Endothelial cell of umbilical vein (primary cell): ENCODE measurements at regions of chr12 and their contacts with region 1.

Region 1: GRCh38 chr12:90253674-90254181 is 545.1 kb upstream of the ATP2B1 start:
- DNase-seq: peak; percentile 90
- H3K4me3 ChIP-seq: no peak overlapping the region
- H3K27ac ChIP-seq: peak overlapping the region; percentile 47
- H3K4me1 ChIP-seq: peaks cover 21% of the 10 kb centered on the region
- H3K27me3 ChIP-seq: no peaks in the 10 kb centered on the region
- CTCF ChIP-seq: peak; percentile 20 to 53
- POLR2A ChIP-seq: no peak

Region 2: GRCh38 chr12:89862511-89863179 is 391.1 kb before region 1 on chr12:
- CTCF ChIA-PET with region 1: no interaction called
- POLR2A ChIA-PET with region 1: no interaction called
- dilution Hi-C with region 1: no loop called
- intact Hi-C with region 1: loop called (anchors 10 kb)
- DNase-seq: peak; percentile 61
- H3K4me3 ChIP-seq: no peak overlapping the region
- H3K27ac ChIP-seq: peak overlapping the region; percentile 40
- H3K4me1 ChIP-seq: peaks cover 18% of the 10 kb centered on the region
- H3K27me3 ChIP-seq: no peaks in the 10 kb centered on the region
- CTCF ChIP-seq: no peak
- POLR2A ChIP-seq: no peak

Region 3: DNA sequence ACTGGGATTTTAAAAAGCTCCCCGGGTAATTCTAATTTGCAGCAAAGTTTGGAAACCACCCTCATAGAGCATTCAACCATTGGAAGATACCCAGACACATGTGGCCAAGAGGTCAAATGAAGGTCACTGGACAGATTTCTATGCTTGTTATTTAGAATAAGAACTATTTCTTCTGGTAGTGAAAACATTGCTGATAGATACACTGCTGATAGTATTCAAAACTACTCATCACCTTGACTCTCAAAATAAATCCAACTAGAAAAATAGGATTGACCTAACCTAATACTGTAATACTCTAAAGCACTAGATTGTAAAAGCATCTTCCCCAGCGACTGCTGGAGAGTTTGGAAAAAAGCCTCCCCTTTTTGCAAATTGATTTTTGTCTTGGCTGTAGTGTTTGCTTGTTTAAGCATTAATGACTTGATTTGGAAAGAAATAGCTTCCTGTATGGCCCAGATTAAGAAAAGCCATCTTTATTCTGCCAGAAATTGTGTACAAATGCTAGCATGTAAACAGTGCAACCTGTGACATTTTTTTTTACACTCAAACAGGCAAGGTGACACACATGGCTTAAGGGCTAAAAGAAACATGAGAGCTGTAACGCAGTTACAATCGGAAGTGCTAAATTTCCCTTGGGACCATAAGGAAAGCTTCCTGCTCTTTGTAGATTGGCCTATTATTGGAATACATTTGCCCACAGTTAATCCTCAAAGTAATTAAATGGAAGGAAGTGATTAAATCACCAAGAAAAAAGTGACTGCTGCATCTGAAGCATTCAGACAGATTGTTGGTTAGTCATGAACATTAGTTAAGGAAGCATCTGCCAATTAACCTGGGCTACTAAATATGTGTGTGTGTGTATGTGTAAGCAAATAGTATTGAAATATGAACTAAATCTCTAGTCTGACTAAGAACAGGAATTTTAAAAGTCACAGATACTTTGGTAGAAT is 188.6 kb before region 1 on chr12:
- CTCF ChIA-PET with region 1: no interaction called
- POLR2A ChIA-PET with region 1: no interaction called
- dilution Hi-C with region 1: no loop called
- intact Hi-C with region 1: loop called (anchors 2 kb)
- DNase-seq: peak; percentile 83
- H3K4me3 ChIP-seq: no peak overlapping the region
- H3K27ac ChIP-seq: no peak overlapping the region
- H3K4me1 ChIP-seq: peaks cover 10% of the 10 kb centered on the region
- H3K27me3 ChIP-seq: no peaks in the 10 kb centered on the region
- CTCF ChIP-seq: no peak
- POLR2A ChIP-seq: no peak

Region 4: DNA sequence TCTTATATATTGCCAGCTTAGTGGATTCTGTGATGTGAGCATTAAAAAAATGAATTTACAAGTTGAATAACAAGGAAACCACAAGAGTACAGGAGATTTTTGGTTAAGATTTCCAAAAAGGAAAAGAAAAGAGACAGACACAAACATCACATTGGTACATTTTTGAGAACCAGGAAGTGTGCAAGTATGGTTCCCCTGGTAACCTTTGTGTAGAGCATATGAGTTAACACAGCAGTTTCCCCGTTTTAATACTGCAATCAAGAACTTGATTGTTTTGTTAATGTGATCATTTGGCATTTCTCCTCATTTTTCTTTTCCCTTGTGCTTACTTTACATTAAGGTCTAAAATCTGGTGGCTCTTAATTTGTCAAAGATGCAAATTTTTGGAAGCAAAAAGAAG is 54.7 kb before region 1 on chr12:
- CTCF ChIA-PET with region 1: no interaction called
- POLR2A ChIA-PET with region 1: no interaction called
- dilution Hi-C with region 1: no loop called
- intact Hi-C with region 1: loop called (anchors 1 kb)
- DNase-seq: peak; percentile 91
- H3K4me3 ChIP-seq: peak overlapping the region in 1 of 3 experiments; percentile 17
- H3K27ac ChIP-seq: peak overlapping the region; percentile 95
- H3K4me1 ChIP-seq: peaks cover 27% of the 10 kb centered on the region
- H3K27me3 ChIP-seq: no peaks in the 10 kb centered on the region
- CTCF ChIP-seq: no peak
- POLR2A ChIP-seq: no peak

Region 5: DNA sequence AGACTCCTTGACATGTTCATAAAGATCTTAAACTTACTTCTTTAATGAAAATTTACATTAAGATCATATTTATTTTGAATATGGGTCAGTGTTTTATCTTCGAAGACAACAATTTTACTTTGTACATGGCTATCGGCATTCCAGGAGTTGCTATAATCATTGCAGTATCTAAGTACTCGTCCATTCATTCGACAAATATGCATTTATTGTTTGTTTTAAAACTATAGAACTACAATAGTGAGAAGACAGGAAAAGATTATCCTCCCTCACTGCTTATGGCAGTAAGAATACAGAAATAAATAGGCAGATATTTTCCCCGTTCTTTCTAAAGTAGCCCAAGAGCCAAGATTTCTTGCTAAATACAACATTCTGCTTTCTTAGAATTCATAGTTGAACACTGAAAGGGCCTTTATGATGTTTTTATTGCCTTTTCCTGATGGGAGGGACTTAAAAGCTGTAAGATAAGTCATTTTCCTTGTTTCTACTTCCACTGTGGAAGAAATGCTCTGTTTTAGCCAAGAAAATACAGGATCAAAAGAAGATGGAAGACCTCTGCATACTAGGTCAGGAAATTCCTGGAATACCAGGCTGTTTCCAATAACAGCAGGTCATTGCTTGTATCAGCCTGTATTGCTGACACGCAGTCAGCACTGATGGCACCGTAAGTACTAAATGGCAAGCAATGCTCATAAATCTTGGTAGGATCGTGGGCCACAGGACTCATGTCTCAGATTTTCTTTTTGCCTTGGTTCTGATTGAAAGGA is 24.1 kb before region 1 on chr12:
- CTCF ChIA-PET with region 1: no interaction called
- POLR2A ChIA-PET with region 1: no interaction called
- dilution Hi-C with region 1: no loop called
- intact Hi-C with region 1: loop called (anchors 1 kb)
- DNase-seq: peak; percentile 92
- H3K4me3 ChIP-seq: peak overlapping the region in 1 of 3 experiments; percentile 38
- H3K27ac ChIP-seq: peak overlapping the region; percentile 66
- H3K4me1 ChIP-seq: peaks cover 25% of the 10 kb centered on the region
- H3K27me3 ChIP-seq: no peaks in the 10 kb centered on the region
- CTCF ChIP-seq: no peak
- POLR2A ChIP-seq: no peak

Region 6: GRCh38 chr12:90441431-90441830 is 187.7 kb after region 1 on chr12:
- CTCF ChIA-PET with region 1: no interaction called
- POLR2A ChIA-PET with region 1: no interaction called
- dilution Hi-C with region 1: no loop called
- intact Hi-C with region 1: no loop called
- DNase-seq: no peak
- H3K4me3 ChIP-seq: no peak overlapping the region
- H3K27ac ChIP-seq: no peak overlapping the region
- H3K4me1 ChIP-seq: no peaks in the 10 kb centered on the region
- H3K27me3 ChIP-seq: no peaks in the 10 kb centered on the region
- CTCF ChIP-seq: no peak
- POLR2A ChIP-seq: no peak

Region 7: GRCh38 chr12:90854136-90854689 is 600.5 kb after region 1 on chr12:
- CTCF ChIA-PET with region 1: interaction called, 3 read pairs
- POLR2A ChIA-PET with region 1: no interaction called
- dilution Hi-C with region 1: no loop called
- intact Hi-C with region 1: loop called (anchors 1 kb)
- DNase-seq: peak; percentile 60
- H3K4me3 ChIP-seq: no peak overlapping the region
- H3K27ac ChIP-seq: no peak overlapping the region
- H3K4me1 ChIP-seq: no peaks in the 10 kb centered on the region
- H3K27me3 ChIP-seq: no peaks in the 10 kb centered on the region
- CTCF ChIP-seq: peak; percentile 59 to 63
- POLR2A ChIP-seq: no peak